PC-9 (cell line): ENCODE measurements at regions of chr5 and their contacts with region 1.

Region 1: GRCh38 chr5:157948738-157949410 is 89.9 kb upstream of the CLINT1 start:
- DNase-seq: peak; percentile 86 to 87
- H3K4me3 ChIP-seq: no peak overlapping the region
- H3K27ac ChIP-seq: no peak overlapping the region
- H3K4me1 ChIP-seq: no peaks in the 10 kb centered on the region
- H3K27me3 ChIP-seq: no peaks in the 10 kb centered on the region
- CTCF ChIP-seq: peak; percentile 78

Region 2: DNA sequence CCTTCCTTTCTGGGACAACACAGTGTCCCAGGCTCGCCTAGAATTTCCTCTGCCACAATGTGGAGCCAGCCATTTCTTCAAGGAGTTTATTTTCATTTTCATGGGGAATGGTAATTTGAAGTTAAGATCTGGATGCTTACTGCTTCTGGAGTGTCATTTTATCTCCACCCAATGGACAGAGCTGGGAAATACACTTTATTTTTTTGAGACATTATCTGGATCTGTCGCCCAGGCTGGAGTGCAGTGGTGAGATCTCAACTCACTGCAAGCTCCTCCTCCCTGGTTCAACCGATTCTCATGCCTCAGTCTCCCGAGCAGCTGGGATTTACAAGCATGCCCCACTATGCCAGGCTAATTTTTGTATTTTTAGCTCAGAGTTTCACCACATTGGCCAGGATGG is 230.4 kb before region 1 on chr5:
- CTCF ChIA-PET with region 1: no interaction called
- POLR2A ChIA-PET with region 1: no interaction called
- intact Hi-C with region 1: no loop called
- DNase-seq: peak in 1 of 2 experiments; percentile 11
- H3K4me3 ChIP-seq: no peak overlapping the region
- H3K27ac ChIP-seq: no peak overlapping the region
- H3K4me1 ChIP-seq: peaks cover 6% of the 10 kb centered on the region; the same call in 1 of the 2 replicates
- H3K27me3 ChIP-seq: no peaks in the 10 kb centered on the region
- CTCF ChIP-seq: peak; percentile 75

Region 3: DNA sequence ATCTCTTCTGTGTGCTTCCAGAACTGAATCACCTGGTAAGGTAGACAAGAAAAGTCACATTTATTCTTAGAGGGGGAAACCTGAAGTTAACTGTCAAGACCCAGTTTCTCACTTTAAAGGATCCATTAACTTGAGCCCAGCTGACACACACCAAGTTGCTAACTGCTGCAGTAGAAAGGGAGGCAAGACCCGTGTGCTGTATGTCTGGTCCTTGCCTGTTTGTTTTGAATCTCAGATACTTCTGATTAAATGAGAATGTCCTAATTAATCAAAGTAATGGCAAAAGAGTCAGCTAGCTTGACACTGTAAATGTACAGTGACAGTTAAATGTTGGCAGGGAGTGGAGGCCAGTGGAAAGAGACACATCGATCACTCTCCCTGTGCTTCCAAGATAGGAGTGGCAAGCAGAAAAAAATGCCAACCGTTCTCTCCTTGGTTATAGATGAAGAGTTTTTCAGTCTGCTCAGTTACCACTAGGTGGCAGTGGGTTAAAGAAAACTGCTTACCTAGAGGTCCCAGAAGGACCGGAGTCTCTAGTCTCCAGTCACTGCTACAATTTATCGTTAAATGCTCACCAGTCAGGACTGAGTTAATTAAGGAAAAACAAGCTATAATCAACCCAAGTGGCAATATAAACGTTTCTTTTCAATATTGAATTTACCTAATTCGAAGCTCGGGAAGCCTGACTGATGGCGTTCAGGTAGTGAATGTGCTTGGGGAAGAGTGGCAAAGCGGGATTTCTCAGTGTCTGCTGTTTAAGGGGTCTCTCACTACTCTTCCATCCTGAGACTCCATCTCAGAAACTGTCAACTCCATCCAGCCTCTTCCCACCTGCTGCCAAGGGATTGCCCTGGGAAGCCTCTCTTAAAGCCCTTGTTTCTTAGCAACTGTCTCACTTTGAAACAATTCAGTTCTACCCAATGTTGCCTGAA is 186.9 kb before region 1 on chr5:
- CTCF ChIA-PET with region 1: no interaction called
- POLR2A ChIA-PET with region 1: no interaction called
- intact Hi-C with region 1: loop called (anchors 5 kb)
- DNase-seq: peak in 1 of 2 experiments; percentile 30
- H3K4me3 ChIP-seq: no peak overlapping the region
- H3K27ac ChIP-seq: no peak overlapping the region
- H3K4me1 ChIP-seq: no peaks in the 10 kb centered on the region
- H3K27me3 ChIP-seq: no peaks in the 10 kb centered on the region
- CTCF ChIP-seq: peak; percentile 88

Region 4: GRCh38 chr5:157820593-157821252 is 128.2 kb before region 1 on chr5:
- CTCF ChIA-PET with region 1: interaction called, 4 read pairs
- POLR2A ChIA-PET with region 1: no interaction called
- intact Hi-C with region 1: loop called (anchors 1 kb)
- DNase-seq: no peak
- H3K4me3 ChIP-seq: no peak overlapping the region
- H3K27ac ChIP-seq: no peak overlapping the region
- H3K4me1 ChIP-seq: no peaks in the 10 kb centered on the region
- H3K27me3 ChIP-seq: no peaks in the 10 kb centered on the region
- CTCF ChIP-seq: peak; percentile 61; the same call in 1 of the 2 replicates

Region 5: GRCh38 chr5:157858527-157859226 is 90.2 kb before region 1 on chr5 and contains the start of gene CLINT1:
- CTCF ChIA-PET with region 1: interaction called, 5 read pairs
- POLR2A ChIA-PET with region 1: no interaction called
- intact Hi-C with region 1: loop called (anchors 2 kb)
- DNase-seq: peak; percentile 74 to 88
- H3K4me3 ChIP-seq: peak within 1 kb of the TSS; percentile 95
- H3K27ac ChIP-seq: peak within 1 kb of the TSS; percentile 64
- H3K4me1 ChIP-seq: peaks cover 17% of the 10 kb centered on the region
- H3K27me3 ChIP-seq: no peaks in the 10 kb centered on the region
- CTCF ChIP-seq: no peak
- total RNA-seq, gene CLINT1: 79.7 and 95.8 TPM in 2 replicates

Region 6: GRCh38 chr5:157917899-157918809 is 30.7 kb before region 1 on chr5:
- CTCF ChIA-PET with region 1: interaction called, 11 read pairs
- POLR2A ChIA-PET with region 1: no interaction called
- intact Hi-C with region 1: no loop called
- DNase-seq: peak; percentile 29 to 64
- H3K4me3 ChIP-seq: no peak overlapping the region
- H3K27ac ChIP-seq: peak overlapping the region; percentile 28; the same call in 1 of the 2 replicates
- H3K4me1 ChIP-seq: peaks cover 22% of the 10 kb centered on the region
- H3K27me3 ChIP-seq: no peaks in the 10 kb centered on the region
- CTCF ChIP-seq: peak; percentile 64

Region 7: GRCh38 chr5:157978061-157978460 is 29.2 kb after region 1 on chr5:
- CTCF ChIA-PET with region 1: interaction called, 10 read pairs
- POLR2A ChIA-PET with region 1: no interaction called
- intact Hi-C with region 1: no loop called
- DNase-seq: no peak
- H3K4me3 ChIP-seq: no peak overlapping the region
- H3K27ac ChIP-seq: no peak overlapping the region
- H3K4me1 ChIP-seq: no peaks in the 10 kb centered on the region
- H3K27me3 ChIP-seq: no peaks in the 10 kb centered on the region
- CTCF ChIP-seq: no peak

Region 8: GRCh38 chr5:158976035-158976434 is 1027.2 kb after region 1 on chr5:
- CTCF ChIA-PET with region 1: no interaction called
- POLR2A ChIA-PET with region 1: no interaction called
- intact Hi-C with region 1: loop called (anchors 2 kb)
- DNase-seq: no peak
- H3K4me3 ChIP-seq: no peak overlapping the region
- H3K27ac ChIP-seq: no peak overlapping the region
- H3K4me1 ChIP-seq: no peaks in the 10 kb centered on the region
- H3K27me3 ChIP-seq: peaks cover 44% of the 10 kb centered on the region
- CTCF ChIP-seq: no peak